ENCODE measurements at regions of chr9 and their contacts with region 1.

Region 1: GRCh38 chr9:96854073-96854876 is at the start of gene ZNF782:
- H3K4me3 Mint-ChIP-seq: peak within 1 kb of the TSS; percentile 99
- H3K27ac Mint-ChIP-seq: peak within 1 kb of the TSS; percentile 90
- H3K4me1 Mint-ChIP-seq: peaks cover 22% of the 10 kb centered on the region
- H3K27me3 Mint-ChIP-seq: peaks cover 9% of the 10 kb centered on the region

Region 2: GRCh38 chr9:96418074-96418809 is 436.0 kb before region 1 on chr9 and contains the start of gene ZNF367:
- intact Hi-C with region 1: loop called (anchors 10 kb)
- H3K4me3 Mint-ChIP-seq: peak within 1 kb of the TSS; percentile 85
- H3K27ac Mint-ChIP-seq: peak within 1 kb of the TSS; percentile 97
- H3K4me1 Mint-ChIP-seq: peaks cover 32% of the 10 kb centered on the region
- H3K27me3 Mint-ChIP-seq: no peaks in the 10 kb centered on the region

Region 3: DNA sequence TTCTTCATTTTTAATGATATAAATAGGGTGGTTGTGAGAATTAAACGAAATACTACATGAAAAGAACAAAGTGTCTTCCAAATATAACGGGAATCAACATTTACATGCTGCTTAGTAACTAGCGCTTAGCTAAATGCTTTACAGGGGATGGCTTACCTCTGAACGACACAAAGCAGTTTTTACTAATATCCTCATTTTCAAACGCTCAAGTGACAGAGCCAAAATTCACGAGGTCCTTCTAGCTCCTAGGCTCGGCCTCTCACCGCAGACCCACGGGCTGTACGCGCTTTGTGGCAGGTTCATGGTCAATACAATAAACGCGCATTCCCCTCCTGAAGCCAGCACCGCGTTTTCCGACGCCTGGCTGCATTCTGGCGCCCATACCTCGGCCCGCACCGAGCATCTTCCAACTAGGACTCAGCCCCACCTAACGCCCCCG is 76.8 kb before region 1 on chr9:
- intact Hi-C with region 1: loop called (anchors 2 kb)
- H3K4me3 Mint-ChIP-seq: peak overlapping the region; percentile 89
- H3K27ac Mint-ChIP-seq: peak overlapping the region; percentile 90
- H3K4me1 Mint-ChIP-seq: peaks cover 5% of the 10 kb centered on the region
- H3K27me3 Mint-ChIP-seq: no peaks in the 10 kb centered on the region

Region 4: GRCh38 chr9:97109194-97109811 is 255.0 kb after region 1 on chr9:
- intact Hi-C with region 1: loop called (anchors 2 kb)
- H3K4me3 Mint-ChIP-seq: no peak overlapping the region
- H3K27ac Mint-ChIP-seq: no peak overlapping the region
- H3K4me1 Mint-ChIP-seq: no peaks in the 10 kb centered on the region
- H3K27me3 Mint-ChIP-seq: peaks cover 4% of the 10 kb centered on the region

Region 5: DNA sequence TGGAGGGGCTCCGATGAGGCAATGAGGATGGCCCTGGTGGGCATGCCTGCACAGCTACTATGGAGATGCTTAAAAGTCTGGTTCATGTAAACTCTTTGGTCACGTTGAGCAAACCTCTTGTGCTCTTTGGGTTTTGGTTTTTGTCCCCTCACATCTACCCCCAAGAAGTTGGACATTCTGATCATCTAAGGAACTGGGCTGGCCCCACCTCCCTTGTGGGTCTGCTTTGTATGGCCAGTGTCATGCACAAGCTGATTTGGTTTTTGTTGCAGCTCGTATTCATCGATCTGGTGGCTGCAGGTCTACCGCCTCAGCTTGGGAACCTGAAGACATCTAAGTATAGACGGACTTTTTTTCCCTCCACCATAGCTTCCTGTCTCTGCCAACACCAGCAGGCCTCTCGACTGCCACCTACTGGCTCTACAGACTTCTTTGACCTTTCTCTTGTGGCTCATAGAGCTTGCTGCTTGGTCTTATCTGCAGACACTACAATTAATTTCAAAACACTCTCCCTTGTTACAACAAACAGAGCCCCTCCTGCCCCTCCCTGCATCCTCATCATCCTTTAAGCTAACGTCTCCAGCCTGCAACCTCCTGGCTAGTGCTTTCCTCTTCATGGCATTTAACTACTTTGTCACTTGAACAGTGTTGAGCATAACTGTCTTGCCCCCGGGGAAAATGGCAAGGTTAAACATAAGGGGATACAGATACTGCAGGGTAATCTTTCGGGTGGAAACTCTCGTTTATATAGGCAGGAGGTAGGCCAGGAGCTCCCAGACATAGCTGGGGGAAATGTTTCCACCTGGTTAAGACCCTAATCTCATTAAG is 744.4 kb after region 1 on chr9:
- intact Hi-C with region 1: loop called (anchors 10 kb)
- H3K4me3 Mint-ChIP-seq: no peak overlapping the region
- H3K27ac Mint-ChIP-seq: no peak overlapping the region
- H3K4me1 Mint-ChIP-seq: peaks cover 13% of the 10 kb centered on the region
- H3K27me3 Mint-ChIP-seq: peaks cover 2% of the 10 kb centered on the region